SK-N-SH (cell line): ENCODE measurements at regions of chr16 and their contacts with region 1.

Region 1: GRCh38 chr16:57507136-57508034 is 21.1 kb upstream of the DOK4 start:
- DNase-seq: peak; percentile 82
- H3K4me3 ChIP-seq: no peak overlapping the region
- H3K27ac ChIP-seq: peak overlapping the region in 1 of 2 experiments; percentile 99; a peak in 3 of 4 replicates
- H3K4me1 ChIP-seq: peaks cover 0 to 56% of the 10 kb centered on the region in 2 experiments; a peak in 1 of 4 replicates
- H3K27me3 ChIP-seq: no peaks in the 10 kb centered on the region
- CTCF ChIP-seq: no peak
- EP300 ChIP-seq: 0 out of 4 replicates have a peak, but pooled peaks of 1 of the 2 experiments have one; percentile 24
- RAD21 ChIP-seq: no peak

Region 2: GRCh38 chr16:57447186-57447962 is 60.0 kb before region 1 on chr16 and contains the starts of genes CIAPIN1 and COQ9:
- CTCF ChIA-PET with region 1: no interaction called
- POLR2A ChIA-PET with region 1: interaction called, 12 read pairs
- DNase-seq: peak; percentile 96
- H3K4me3 ChIP-seq: peak within 1 kb of the TSS; percentile 90 to 96
- H3K27ac ChIP-seq: peak within 1 kb of the TSS; percentile 65 to 84; a peak in 3 of 4 replicates
- H3K4me1 ChIP-seq: peaks cover 3 to 9% of the 10 kb centered on the region in 2 experiments; a peak in 2 of 4 replicates
- H3K27me3 ChIP-seq: no peaks in the 10 kb centered on the region
- CTCF ChIP-seq: no peak
- EP300 ChIP-seq: no peak
- RAD21 ChIP-seq: no peak
- polyA plus RNA-seq, gene CIAPIN1: 43.6 and 63.3 TPM in 2 replicates
- polyA plus RNA-seq, gene COQ9: 81.2 and 104 TPM in 2 replicates

Region 3: DNA sequence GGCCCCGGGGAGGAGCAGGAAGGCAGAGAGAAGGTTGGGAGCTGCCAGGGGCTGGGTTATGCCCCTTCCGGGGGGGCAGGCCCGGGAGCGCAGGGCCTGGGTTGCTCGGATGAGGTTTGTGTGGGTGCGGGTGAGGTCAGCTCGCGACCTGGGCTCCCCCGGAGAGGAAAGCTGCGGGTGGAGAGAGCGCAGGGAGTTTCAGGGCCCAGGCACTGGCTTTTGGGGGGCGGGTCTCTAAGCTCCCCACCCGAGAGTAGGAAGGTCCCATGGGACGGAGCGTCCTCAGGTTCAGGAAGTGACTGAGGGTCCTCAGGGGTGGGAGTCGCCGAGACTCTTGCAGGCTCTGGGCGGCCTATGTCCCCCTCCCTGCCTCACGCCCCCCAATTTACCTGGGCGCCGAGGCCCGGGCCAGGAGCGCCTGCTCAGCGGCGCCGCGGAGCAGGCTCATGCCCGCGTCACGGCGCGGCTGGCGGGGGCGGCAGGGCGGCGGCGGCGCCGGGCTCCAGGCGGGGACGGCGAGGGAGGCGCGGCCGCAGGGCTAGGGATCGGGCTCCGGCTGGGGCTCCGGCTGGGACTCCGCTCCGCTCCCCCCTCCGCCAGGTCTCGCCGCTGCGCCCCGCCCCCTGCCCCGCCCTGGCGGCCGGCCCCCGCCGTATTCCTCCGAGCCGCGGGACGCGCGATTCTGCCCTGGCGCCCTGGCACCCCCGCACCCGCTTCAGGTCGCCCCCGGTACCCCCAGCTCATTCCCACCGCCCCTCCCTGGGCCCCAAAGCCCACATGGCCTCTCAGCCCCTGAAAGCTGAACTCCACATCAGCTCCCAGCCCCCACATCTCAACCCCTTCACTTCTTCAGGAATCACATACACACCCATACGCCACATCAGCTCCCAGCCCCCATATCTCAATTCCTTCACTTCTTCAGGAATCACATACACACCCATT is 21.2 kb before region 1 on chr16 and contains the start of gene DOK4:
- CTCF ChIA-PET with region 1: interaction called, 354 read pairs
- POLR2A ChIA-PET with region 1: interaction called, 152 read pairs
- DNase-seq: peak; percentile 98
- H3K4me3 ChIP-seq: peak within 1 kb of the TSS; percentile 67 to 83
- H3K27ac ChIP-seq: peak within 1 kb of the TSS in 1 of 2 experiments; percentile 94; a peak in 2 of 4 replicates
- H3K4me1 ChIP-seq: peaks cover 0 to 42% of the 10 kb centered on the region in 2 experiments; a peak in 1 of 4 replicates
- H3K27me3 ChIP-seq: no peaks in the 10 kb centered on the region
- CTCF ChIP-seq: no peak
- EP300 ChIP-seq: no peak
- RAD21 ChIP-seq: no peak
- polyA plus RNA-seq, gene DOK4: 28.4 and 36.9 TPM in 2 replicates

Region 4: GRCh38 chr16:58152246-58152868 is 645.0 kb after region 1 on chr16:
- CTCF ChIA-PET with region 1: no interaction called
- POLR2A ChIA-PET with region 1: no interaction called
- DNase-seq: no peak
- H3K4me3 ChIP-seq: no peak overlapping the region
- H3K27ac ChIP-seq: no peak overlapping the region
- H3K4me1 ChIP-seq: no peaks in the 10 kb centered on the region
- H3K27me3 ChIP-seq: no peaks in the 10 kb centered on the region
- CTCF ChIP-seq: no peak
- EP300 ChIP-seq: no peak
- RAD21 ChIP-seq: no peak